ENCODE measurements at regions of chr9 and their contacts with region 1.

Region 1: GRCh38 chr9:19464764-19465585 is 56.2 kb downstream of the ACER2 start:
- DNase-seq: peak; percentile 61 to 79 (median 74)
- H3K4me3 ChIP-seq: peak overlapping the region in 1 of 2 donors; percentile 35
- H3K4me3 Mint-ChIP-seq: peak overlapping the region; percentile 84 to 98 (median 88)
- H3K27ac ChIP-seq: no peak overlapping the region
- H3K27ac Mint-ChIP-seq: peak overlapping the region in 3 of 7 donors; percentile 46 to 89 (median 80)
- H3K4me1 ChIP-seq: peaks cover 9% of the 10 kb centered on the region
- H3K4me1 Mint-ChIP-seq: peaks cover 7 to 14% (median 11%) of the 10 kb centered on the region in 4 donors
- H3K27me3 ChIP-seq: no peaks in the 10 kb centered on the region
- H3K27me3 Mint-ChIP-seq: no peaks in the 10 kb centered on the region

Region 2: GRCh38 chr9:19386502-19387044 is 78.4 kb before region 1 on chr9:
- CTCF ChIA-PET with region 1: interaction called, 10 read pairs
- POLR2A ChIA-PET with region 1: no interaction called
- intact Hi-C with region 1: no loop called
- DNase-seq: no peak
- H3K4me3 ChIP-seq: no peak overlapping the region
- H3K4me3 Mint-ChIP-seq: peak overlapping the region in 1 of 8 donors; percentile 17
- H3K27ac ChIP-seq: no peak overlapping the region
- H3K27ac Mint-ChIP-seq: peak overlapping the region in 1 of 7 donors; percentile 14
- H3K4me1 ChIP-seq: no peaks in the 10 kb centered on the region
- H3K4me1 Mint-ChIP-seq: peaks cover 0 to 2% (median 0%) of the 10 kb centered on the region in 4 donors
- H3K27me3 ChIP-seq: no peaks in the 10 kb centered on the region
- H3K27me3 Mint-ChIP-seq: peaks cover 4 to 7% of the 10 kb centered on the region in 2 donors

Region 3: GRCh38 chr9:19431361-19432171 is 33.4 kb before region 1 on chr9:
- CTCF ChIA-PET with region 1: interaction called, 29 read pairs
- POLR2A ChIA-PET with region 1: no interaction called
- intact Hi-C with region 1: no loop called
- DNase-seq: no peak
- H3K4me3 ChIP-seq: no peak overlapping the region
- H3K4me3 Mint-ChIP-seq: no peak overlapping the region
- H3K27ac ChIP-seq: no peak overlapping the region
- H3K27ac Mint-ChIP-seq: no peak overlapping the region
- H3K4me1 ChIP-seq: no peaks in the 10 kb centered on the region
- H3K4me1 Mint-ChIP-seq: no peaks in the 10 kb centered on the region
- H3K27me3 ChIP-seq: no peaks in the 10 kb centered on the region
- H3K27me3 Mint-ChIP-seq: no peaks in the 10 kb centered on the region

Region 4: DNA sequence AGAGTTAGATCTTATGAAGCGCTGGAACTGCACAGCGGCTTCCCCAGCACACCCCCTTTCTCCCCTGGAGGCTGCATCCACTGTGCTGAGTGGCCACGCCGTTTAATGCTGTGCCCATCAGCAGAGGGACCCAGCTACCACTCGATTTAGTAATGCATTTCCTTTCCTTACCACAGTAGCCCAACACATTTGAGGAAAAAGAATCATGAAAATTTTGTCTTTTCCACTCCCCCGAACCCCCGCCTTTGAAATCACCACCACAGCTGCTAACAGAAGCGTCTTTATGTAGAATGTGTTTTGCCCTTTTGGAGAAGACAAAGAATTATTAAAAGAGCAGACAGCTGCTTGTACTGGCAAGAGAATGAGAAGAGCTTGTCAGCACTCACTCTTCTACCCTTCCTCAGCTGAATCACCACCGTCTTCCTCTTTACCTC is 17.0 kb after region 1 on chr9:
- CTCF ChIA-PET with region 1: interaction called, 39 read pairs
- POLR2A ChIA-PET with region 1: no interaction called
- intact Hi-C with region 1: no loop called
- DNase-seq: no peak
- H3K4me3 ChIP-seq: no peak overlapping the region
- H3K4me3 Mint-ChIP-seq: no peak overlapping the region
- H3K27ac ChIP-seq: no peak overlapping the region
- H3K27ac Mint-ChIP-seq: no peak overlapping the region
- H3K4me1 ChIP-seq: no peaks in the 10 kb centered on the region
- H3K4me1 Mint-ChIP-seq: no peaks in the 10 kb centered on the region
- H3K27me3 ChIP-seq: no peaks in the 10 kb centered on the region
- H3K27me3 Mint-ChIP-seq: peaks cover 4 to 8% of the 10 kb centered on the region in 2 donors

Region 5: DNA sequence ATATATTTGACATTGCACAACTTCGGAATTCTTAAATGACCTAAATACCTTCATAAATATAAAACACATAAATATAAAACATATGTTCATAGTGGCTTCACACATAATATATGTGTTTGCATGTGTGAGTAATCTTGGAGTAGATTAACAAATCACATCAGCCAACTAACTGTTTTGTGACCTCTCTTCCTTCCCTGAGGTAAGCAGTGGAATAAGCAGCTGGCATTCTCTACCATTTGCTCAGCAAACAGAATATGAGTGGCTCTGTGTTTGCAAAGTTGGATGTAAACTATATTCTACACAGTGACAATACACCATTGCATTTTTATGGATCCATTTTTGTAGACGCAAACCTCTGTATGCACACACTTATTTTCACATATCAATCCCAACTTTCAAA is 133.7 kb after region 1 on chr9:
- CTCF ChIA-PET with region 1: no interaction called
- POLR2A ChIA-PET with region 1: no interaction called
- intact Hi-C with region 1: no loop called
- DNase-seq: no peak
- H3K4me3 ChIP-seq: no peak overlapping the region
- H3K4me3 Mint-ChIP-seq: no peak overlapping the region
- H3K27ac ChIP-seq: no peak overlapping the region
- H3K27ac Mint-ChIP-seq: no peak overlapping the region
- H3K4me1 ChIP-seq: no peaks in the 10 kb centered on the region
- H3K4me1 Mint-ChIP-seq: no peaks in the 10 kb centered on the region
- H3K27me3 ChIP-seq: no peaks in the 10 kb centered on the region
- H3K27me3 Mint-ChIP-seq: peaks cover 4 to 12% of the 10 kb centered on the region in 2 donors

Measured in CD4-positive, alpha-beta memory T cell (primary cell).